Pancreas (tissue), 10 donors: ENCODE measurements at regions of chr4 and their contacts with region 1.

Region 1: GRCh38 chr4:1899149-1900086 is 28.2 kb downstream of the NSD2 start:
- DNase-seq: peak; percentile 53 to 81 (median 71)
- ATAC-seq: peak; percentile 79 to 97 (median 96)
- H3K4me3 ChIP-seq: no peak overlapping the region
- H3K27ac ChIP-seq: no peak overlapping the region
- H3K4me1 ChIP-seq: no peaks in the 10 kb centered on the region
- H3K27me3 ChIP-seq: no peaks in the 10 kb centered on the region
- CTCF ChIP-seq: peak; percentile 78 to 89 (median 88)

Region 2: GRCh38 chr4:1752284-1753041 is 147.0 kb before region 1 on chr4:
- intact Hi-C with region 1: loop called in 2 of 3 experiments (anchors 5 kb)
- DNase-seq: no peak
- ATAC-seq: peak; percentile 11 to 37 (median 23)
- H3K4me3 ChIP-seq: no peak overlapping the region
- H3K27ac ChIP-seq: peak overlapping the region; percentile 22 to 55 (median 40)
- H3K4me1 ChIP-seq: no peaks in the 10 kb centered on the region
- H3K27me3 ChIP-seq: no peaks in the 10 kb centered on the region
- CTCF ChIP-seq: no peak

Region 3: GRCh38 chr4:1992468-1993168 is 93.2 kb after region 1 on chr4:
- intact Hi-C with region 1: no loop called
- DNase-seq: no peak
- ATAC-seq: peak in 1 of 4 donors; percentile 7
- H3K4me3 ChIP-seq: no peak overlapping the region
- H3K27ac ChIP-seq: no peak overlapping the region
- H3K4me1 ChIP-seq: no peaks in the 10 kb centered on the region
- H3K27me3 ChIP-seq: no peaks in the 10 kb centered on the region
- CTCF ChIP-seq: no peak